WTC11 (cell line): ENCODE measurements at regions of chr4 and their contacts with region 1.

Region 1: DNA sequence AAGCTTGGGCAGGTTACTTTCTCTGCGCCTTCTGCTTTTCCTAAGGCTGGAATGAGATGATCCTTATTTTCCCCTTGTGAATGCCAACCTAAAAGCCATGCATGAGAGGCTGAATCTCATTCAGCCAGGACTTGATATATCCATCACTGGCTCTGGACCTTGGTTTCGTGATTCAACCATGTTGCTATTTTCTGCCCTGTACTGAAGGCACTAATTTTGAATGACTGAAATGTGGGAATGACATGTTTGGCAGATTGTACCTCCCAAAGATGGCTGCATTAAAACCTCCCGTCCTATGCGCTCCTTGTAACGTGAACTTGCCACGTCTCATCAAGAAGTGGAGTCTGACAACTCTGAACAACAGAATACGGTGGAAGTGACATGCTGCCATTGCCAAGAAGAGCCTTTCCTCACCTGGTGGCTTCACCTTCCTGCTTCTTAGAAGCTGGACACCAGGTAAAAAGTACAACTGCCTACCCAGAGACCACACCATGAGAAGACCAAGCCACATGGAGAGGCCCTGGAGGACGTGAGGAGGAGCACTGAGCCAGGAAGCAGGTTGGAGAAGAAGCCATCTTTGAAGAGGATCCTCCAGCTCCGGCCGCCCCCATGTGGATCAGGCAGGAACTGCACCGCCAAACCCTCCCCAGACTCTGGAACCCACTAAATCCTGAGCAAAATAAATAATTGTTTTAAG is 174.5 kb downstream of the NSUN7 start:
- DNase-seq: peak; percentile 81
- ATAC-seq: peak; percentile 59
- H3K4me3 Mint-ChIP-seq: no peak overlapping the region
- H3K27ac Mint-ChIP-seq: no peak overlapping the region
- H3K4me1 Mint-ChIP-seq: peaks cover 16% of the 10 kb centered on the region
- H3K27me3 Mint-ChIP-seq: no peaks in the 10 kb centered on the region
- CTCF ChIP-seq: peak; percentile 87

Region 2: DNA sequence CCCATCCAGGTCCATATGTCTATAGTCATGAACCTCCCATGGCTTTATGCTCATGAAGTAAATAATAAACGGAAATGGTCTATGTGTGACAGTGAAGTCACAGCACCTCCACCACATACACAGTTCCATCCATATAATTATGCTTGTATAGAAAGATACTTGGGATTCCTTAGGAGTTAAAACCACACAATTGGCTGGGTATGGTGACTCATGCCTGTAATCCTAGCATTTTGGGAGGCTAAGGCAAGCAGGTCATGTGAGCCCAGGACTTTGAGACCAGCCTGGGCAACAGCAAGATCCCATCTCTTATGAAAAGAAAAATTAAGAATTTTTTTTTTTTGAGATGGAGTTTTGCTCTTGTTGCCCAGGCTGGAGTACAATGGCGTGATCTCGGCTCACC is 238.9 kb before region 1 on chr4:
- CTCF ChIA-PET with region 1: no interaction called
- POLR2A ChIA-PET with region 1: no interaction called
- DNase-seq: no peak
- ATAC-seq: no peak
- H3K4me3 Mint-ChIP-seq: no peak overlapping the region
- H3K27ac Mint-ChIP-seq: no peak overlapping the region
- H3K4me1 Mint-ChIP-seq: peaks cover 8% of the 10 kb centered on the region; the same call in 1 of the 2 replicates
- H3K27me3 Mint-ChIP-seq: no peaks in the 10 kb centered on the region
- CTCF ChIP-seq: no peak

Region 3: GRCh38 chr4:40840985-40841571 is 83.2 kb before region 1 on chr4:
- CTCF ChIA-PET with region 1: interaction called, 17 read pairs
- POLR2A ChIA-PET with region 1: no interaction called
- DNase-seq: peak; percentile 97
- ATAC-seq: peak; percentile 94
- H3K4me3 Mint-ChIP-seq: peak overlapping the region; percentile 23; the same call in 1 of the 2 replicates
- H3K27ac Mint-ChIP-seq: peak overlapping the region; percentile 82
- H3K4me1 Mint-ChIP-seq: peaks cover 19% of the 10 kb centered on the region
- H3K27me3 Mint-ChIP-seq: no peaks in the 10 kb centered on the region
- CTCF ChIP-seq: peak; percentile 69

Region 4: GRCh38 chr4:40934671-40935070 is 10.4 kb after region 1 on chr4:
- CTCF ChIA-PET with region 1: interaction called, 29 read pairs
- POLR2A ChIA-PET with region 1: no interaction called
- DNase-seq: no peak
- ATAC-seq: peak; percentile 89
- H3K4me3 Mint-ChIP-seq: no peak overlapping the region
- H3K27ac Mint-ChIP-seq: peak overlapping the region; percentile 77
- H3K4me1 Mint-ChIP-seq: peaks cover 44% of the 10 kb centered on the region
- H3K27me3 Mint-ChIP-seq: no peaks in the 10 kb centered on the region
- CTCF ChIP-seq: no peak

Region 5: GRCh38 chr4:40976343-40976742 is 52.1 kb after region 1 on chr4:
- CTCF ChIA-PET with region 1: interaction called, 13 read pairs
- POLR2A ChIA-PET with region 1: no interaction called
- DNase-seq: peak; percentile 26
- ATAC-seq: peak; percentile 55
- H3K4me3 Mint-ChIP-seq: no peak overlapping the region
- H3K27ac Mint-ChIP-seq: no peak overlapping the region
- H3K4me1 Mint-ChIP-seq: 0 out of 2 replicates have a peak, but pooled peaks cover 2% of the 10 kb centered on the region
- H3K27me3 Mint-ChIP-seq: no peaks in the 10 kb centered on the region
- CTCF ChIP-seq: peak; percentile 56; the same call in 1 of the 2 replicates

Region 6: GRCh38 chr4:41214136-41214824 is 290.0 kb after region 1 on chr4 and contains the start of gene APBB2:
- CTCF ChIA-PET with region 1: interaction called, 34 read pairs
- POLR2A ChIA-PET with region 1: interaction called, 4 read pairs
- DNase-seq: peak; percentile 96
- ATAC-seq: peak; percentile 80
- H3K4me3 Mint-ChIP-seq: peak within 1 kb of the TSS; percentile 83
- H3K27ac Mint-ChIP-seq: no peak within 1 kb of the TSS
- H3K4me1 Mint-ChIP-seq: peaks cover 46% of the 10 kb centered on the region
- H3K27me3 Mint-ChIP-seq: peaks cover 13% of the 10 kb centered on the region
- CTCF ChIP-seq: peak; percentile 80
- total RNA-seq, gene APBB2: 43.2 to 49.0 TPM (median 48.5 TPM) in 3 replicates

Region 7: GRCh38 chr4:41257257-41257901 is 333.1 kb after region 1 on chr4:
- CTCF ChIA-PET with region 1: interaction called, 14 read pairs
- POLR2A ChIA-PET with region 1: no interaction called
- DNase-seq: peak; percentile 55
- ATAC-seq: peak; percentile 35
- H3K4me3 Mint-ChIP-seq: peak overlapping the region; percentile 94
- H3K27ac Mint-ChIP-seq: no peak overlapping the region
- H3K4me1 Mint-ChIP-seq: peaks cover 32% of the 10 kb centered on the region
- H3K27me3 Mint-ChIP-seq: no peaks in the 10 kb centered on the region; the same call in 1 of the 2 replicates
- CTCF ChIP-seq: no peak